ENCODE measurements at regions of chrX and their contacts with region 1.

Region 1: GRCh38 chrX:39149761-39150160 is 348.5 kb downstream of the MID1IP1 start:
- DNase-seq: peak; percentile 39 to 86 (median 62)
- H3K4me3 ChIP-seq: no peak overlapping the region
- H3K27ac ChIP-seq: no peak overlapping the region
- H3K4me1 ChIP-seq: no peaks in the 10 kb centered on the region
- H3K27me3 ChIP-seq: peaks cover 14% of the 10 kb centered on the region
- CTCF ChIP-seq: peak; percentile 34 to 66 (median 54)
- POLR2A ChIP-seq: no peak

Region 2: DNA sequence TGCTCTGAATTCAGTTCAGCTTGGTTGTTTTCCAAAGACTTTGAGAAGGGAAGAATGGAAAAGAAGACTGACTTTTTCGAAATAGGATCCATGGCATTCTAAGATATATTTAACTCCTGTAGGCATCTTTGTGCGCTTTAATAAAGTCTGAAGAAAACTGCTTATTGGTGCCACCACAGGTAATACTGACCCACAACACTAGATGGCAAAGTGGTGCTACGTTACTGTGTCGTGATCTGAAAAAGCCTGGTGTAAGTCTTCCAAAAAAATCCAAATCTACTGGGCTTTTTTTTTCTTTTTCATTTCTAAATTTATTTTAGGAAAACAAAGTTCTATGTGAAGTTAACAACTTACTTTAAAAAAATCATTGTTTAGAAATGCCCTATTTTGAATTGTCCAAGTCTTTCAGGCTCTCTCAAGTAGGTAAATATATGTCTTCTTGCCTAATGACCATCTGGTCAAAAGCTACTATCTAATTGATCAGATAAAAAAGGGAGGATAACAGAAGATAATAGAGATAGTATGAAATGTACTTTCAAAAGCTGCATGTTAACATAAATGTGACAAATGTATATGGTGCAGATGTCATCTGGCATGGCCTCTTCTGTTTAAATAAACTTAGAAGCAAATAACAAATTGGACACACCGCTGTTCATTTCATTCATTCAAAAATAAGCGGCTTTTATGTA is 395.5 kb before region 1 on chrX:
- intact Hi-C with region 1: loop called in 1 of 2 experiments (anchors 10 kb)
- DNase-seq: peak in 6 of 7 donors; percentile 9 to 60 (median 27)
- H3K4me3 ChIP-seq: no peak overlapping the region
- H3K27ac ChIP-seq: no peak overlapping the region
- H3K4me1 ChIP-seq: no peaks in the 10 kb centered on the region
- H3K27me3 ChIP-seq: peaks cover 6% of the 10 kb centered on the region
- CTCF ChIP-seq: peak; percentile 47 to 74 (median 66)
- POLR2A ChIP-seq: no peak

Region 3: GRCh38 chrX:39012621-39013111 is 137.1 kb before region 1 on chrX:
- intact Hi-C with region 1: no loop called
- DNase-seq: no peak
- H3K4me3 ChIP-seq: no peak overlapping the region
- H3K27ac ChIP-seq: no peak overlapping the region
- H3K4me1 ChIP-seq: no peaks in the 10 kb centered on the region
- H3K27me3 ChIP-seq: no peaks in the 10 kb centered on the region
- CTCF ChIP-seq: no peak
- POLR2A ChIP-seq: no peak